CD8-positive, alpha-beta T cell (primary cell): ENCODE measurements at regions of chr5 and their contacts with region 1.

Region 1: DNA sequence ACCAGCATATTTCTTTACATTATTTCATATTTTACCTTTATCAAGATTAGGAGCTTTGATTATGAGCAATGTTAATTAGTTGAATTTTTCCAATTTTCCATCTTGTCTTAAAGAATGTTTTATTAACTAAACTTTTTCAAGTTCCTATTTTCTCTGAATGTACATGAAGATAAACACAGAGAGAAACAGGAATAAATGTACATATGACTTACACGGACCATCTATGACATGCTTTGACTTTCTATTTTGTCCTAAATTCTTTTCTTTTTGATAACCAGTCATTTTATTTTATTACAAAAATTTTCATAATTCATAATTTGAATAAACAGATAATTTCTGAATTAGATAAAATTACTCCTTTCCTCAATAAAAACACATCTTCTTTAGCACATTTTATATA is 1038.8 kb upstream of the ARRDC3 start:
- DNase-seq: no peak
- ATAC-seq: no peak
- H3K4me3 ChIP-seq: no peak overlapping the region
- H3K4me3 Mint-ChIP-seq: no peak overlapping the region
- H3K27ac ChIP-seq: no peak overlapping the region
- H3K27ac Mint-ChIP-seq: no peak overlapping the region
- H3K4me1 ChIP-seq: no peaks in the 10 kb centered on the region
- H3K4me1 Mint-ChIP-seq: no peaks in the 10 kb centered on the region
- H3K27me3 ChIP-seq: no peaks in the 10 kb centered on the region
- H3K27me3 Mint-ChIP-seq: no peaks in the 10 kb centered on the region
- CTCF ChIP-seq: no peak

Region 2: GRCh38 chr5:91266184-91266705 is 1155.7 kb before region 1 on chr5:
- CTCF ChIA-PET with region 1: no interaction called
- POLR2A ChIA-PET with region 1: no interaction called
- intact Hi-C with region 1: no loop called
- DNase-seq: peak in 2 of 9 experiments; percentile 11 to 31
- ATAC-seq: peak; percentile 52
- H3K4me3 ChIP-seq: no peak overlapping the region
- H3K4me3 Mint-ChIP-seq: no peak overlapping the region
- H3K27ac ChIP-seq: no peak overlapping the region
- H3K27ac Mint-ChIP-seq: no peak overlapping the region
- H3K4me1 ChIP-seq: peaks cover 8% of the 10 kb centered on the region
- H3K4me1 Mint-ChIP-seq: peaks cover 16% of the 10 kb centered on the region
- H3K27me3 ChIP-seq: no peaks in the 10 kb centered on the region
- H3K27me3 Mint-ChIP-seq: no peaks in the 10 kb centered on the region
- CTCF ChIP-seq: no peak

Region 3: DNA sequence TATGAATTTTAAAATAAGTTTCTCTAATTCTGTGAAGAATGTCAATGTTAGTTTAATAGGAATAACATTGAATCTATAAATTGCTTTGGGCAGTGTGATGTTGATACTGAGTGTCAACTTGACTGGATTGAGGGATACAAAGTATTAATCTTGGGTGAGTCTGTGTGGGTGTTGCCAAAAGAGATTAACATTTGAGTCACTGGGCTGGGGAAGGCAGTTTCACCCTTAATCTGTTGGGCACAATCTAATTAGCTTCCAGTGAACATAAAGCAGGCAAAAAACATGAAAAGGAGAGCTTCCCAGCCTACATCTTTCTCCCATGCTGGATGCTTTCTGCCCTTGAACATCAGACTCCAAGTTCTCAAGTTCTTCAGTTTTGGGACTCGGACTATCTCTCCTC is 206.8 kb before region 1 on chr5:
- CTCF ChIA-PET with region 1: no interaction called
- POLR2A ChIA-PET with region 1: no interaction called
- intact Hi-C with region 1: loop called in 1 of 2 experiments (anchors 10 kb)
- DNase-seq: no peak
- ATAC-seq: no peak
- H3K4me3 ChIP-seq: no peak overlapping the region
- H3K4me3 Mint-ChIP-seq: no peak overlapping the region
- H3K27ac ChIP-seq: no peak overlapping the region
- H3K27ac Mint-ChIP-seq: no peak overlapping the region
- H3K4me1 ChIP-seq: no peaks in the 10 kb centered on the region
- H3K4me1 Mint-ChIP-seq: no peaks in the 10 kb centered on the region
- H3K27me3 ChIP-seq: no peaks in the 10 kb centered on the region
- H3K27me3 Mint-ChIP-seq: no peaks in the 10 kb centered on the region
- CTCF ChIP-seq: no peak

Region 4: DNA sequence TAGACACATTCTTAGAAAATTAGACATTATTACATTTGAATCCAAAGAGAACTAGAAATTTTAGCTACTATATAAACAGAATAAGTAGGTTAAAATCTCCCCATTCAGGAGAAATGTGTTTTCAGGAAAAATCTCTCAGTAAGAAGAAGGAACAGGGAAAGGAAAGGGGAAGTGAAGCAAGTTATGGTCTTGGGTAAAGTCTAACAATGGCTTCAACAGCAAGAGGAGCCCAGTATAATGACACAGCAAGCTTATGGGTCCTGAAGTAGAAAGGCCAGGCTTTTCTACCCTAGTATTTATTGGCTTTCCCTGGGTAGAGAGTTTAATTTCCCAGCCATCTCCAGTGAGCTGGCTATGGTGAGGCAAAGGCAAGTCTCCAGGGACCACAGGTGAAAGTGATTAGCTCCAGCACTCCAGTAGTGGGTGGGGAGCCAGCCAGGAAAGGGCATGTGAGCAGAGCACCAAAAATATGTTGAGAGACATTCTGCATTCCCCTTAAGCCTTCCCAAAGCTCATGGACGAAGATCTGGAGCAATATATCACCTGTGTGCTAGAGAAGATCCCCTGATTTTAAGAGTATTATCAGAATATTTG is 177.4 kb after region 1 on chr5:
- CTCF ChIA-PET with region 1: no interaction called
- POLR2A ChIA-PET with region 1: no interaction called
- intact Hi-C with region 1: no loop called
- DNase-seq: no peak
- ATAC-seq: no peak
- H3K4me3 ChIP-seq: no peak overlapping the region
- H3K4me3 Mint-ChIP-seq: no peak overlapping the region
- H3K27ac ChIP-seq: no peak overlapping the region
- H3K27ac Mint-ChIP-seq: no peak overlapping the region
- H3K4me1 ChIP-seq: no peaks in the 10 kb centered on the region
- H3K4me1 Mint-ChIP-seq: no peaks in the 10 kb centered on the region
- H3K27me3 ChIP-seq: no peaks in the 10 kb centered on the region
- H3K27me3 Mint-ChIP-seq: no peaks in the 10 kb centered on the region
- CTCF ChIP-seq: no peak